Activated CD4-positive, alpha-beta memory T cell treated with anti-CD3 and anti-CD28 coated beads, Interleukin-2, amount 10 ng/mL, durations not matched to agents 7 days and 5 days (primary cell): ENCODE measurements at regions of chr2 and their contacts with region 1.

Region 1: GRCh38 chr2:74845217-74846011 is 11.5 kb downstream of the HK2 start:
- DNase-seq: peak; percentile 55
- H3K4me3 Mint-ChIP-seq: peak overlapping the region; percentile 28
- H3K27ac Mint-ChIP-seq: peak overlapping the region; percentile 81
- H3K4me1 Mint-ChIP-seq: peaks cover 96% of the 10 kb centered on the region
- H3K27me3 Mint-ChIP-seq: no peaks in the 10 kb centered on the region

Region 2: GRCh38 chr2:74317701-74318301 is 527.6 kb before region 1 on chr2:
- CTCF ChIA-PET with region 1: no interaction called
- POLR2A ChIA-PET with region 1: no interaction called
- DNase-seq: no peak
- H3K4me3 Mint-ChIP-seq: no peak overlapping the region
- H3K27ac Mint-ChIP-seq: no peak overlapping the region
- H3K4me1 Mint-ChIP-seq: no peaks in the 10 kb centered on the region
- H3K27me3 Mint-ChIP-seq: no peaks in the 10 kb centered on the region

Region 3: GRCh38 chr2:74822771-74823566 is 22.4 kb before region 1 on chr2:
- CTCF ChIA-PET with region 1: no interaction called
- POLR2A ChIA-PET with region 1: no interaction called
- DNase-seq: no peak
- H3K4me3 Mint-ChIP-seq: no peak overlapping the region
- H3K27ac Mint-ChIP-seq: no peak overlapping the region
- H3K4me1 Mint-ChIP-seq: peaks cover 5% of the 10 kb centered on the region
- H3K27me3 Mint-ChIP-seq: peaks cover 6% of the 10 kb centered on the region

Region 4: GRCh38 chr2:74833418-74834233 is 11.8 kb before region 1 on chr2 and contains the start of gene HK2:
- CTCF ChIA-PET with region 1: interaction called, 59 read pairs
- POLR2A ChIA-PET with region 1: interaction called, 62 read pairs
- DNase-seq: peak; percentile 88
- H3K4me3 Mint-ChIP-seq: peak within 1 kb of the TSS; percentile 96
- H3K27ac Mint-ChIP-seq: peak within 1 kb of the TSS; percentile 88
- H3K4me1 Mint-ChIP-seq: peaks cover 48% of the 10 kb centered on the region
- H3K27me3 Mint-ChIP-seq: peaks cover 6% of the 10 kb centered on the region
- total RNA-seq, gene HK2: 36.8 to 37.8 TPM